PC-9 (cell line): ENCODE measurements at regions of chr2 and their contacts with region 1.

Region 1: GRCh38 chr2:1550658-1551316 is 137.5 kb downstream of the TPO start:
- DNase-seq: peak in 1 of 2 experiments; percentile 53
- H3K4me3 ChIP-seq: no peak overlapping the region
- H3K27ac ChIP-seq: no peak overlapping the region
- H3K4me1 ChIP-seq: peaks cover 27% of the 10 kb centered on the region
- H3K27me3 ChIP-seq: peaks cover 7% of the 10 kb centered on the region; the same call in 1 of the 2 replicates
- CTCF ChIP-seq: peak; percentile 95

Region 2: DNA sequence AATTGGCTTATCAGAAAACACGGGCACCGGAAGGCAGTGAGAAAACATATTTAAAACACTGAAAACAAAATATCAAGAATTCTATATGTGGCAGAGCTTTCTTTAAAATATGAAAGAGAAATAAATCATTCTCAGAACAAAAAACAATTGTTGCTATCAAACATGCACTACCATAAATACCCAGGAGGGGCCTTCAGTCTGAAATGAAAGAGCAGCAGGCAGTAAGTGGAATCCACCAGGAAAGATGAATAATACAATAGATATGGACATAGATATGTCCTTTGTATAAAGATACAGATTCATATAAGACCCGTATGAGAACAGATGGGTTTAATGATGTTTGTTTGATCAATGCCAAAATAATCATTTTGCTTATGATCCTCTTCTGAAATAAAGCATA is 1015.6 kb before region 1 on chr2:
- CTCF ChIA-PET with region 1: no interaction called
- POLR2A ChIA-PET with region 1: no interaction called
- intact Hi-C with region 1: loop called (anchors 10 kb)
- DNase-seq: no peak
- H3K4me3 ChIP-seq: no peak overlapping the region
- H3K27ac ChIP-seq: no peak overlapping the region
- H3K4me1 ChIP-seq: no peaks in the 10 kb centered on the region
- H3K27me3 ChIP-seq: peaks cover 11% of the 10 kb centered on the region; the same call in 1 of the 2 replicates
- CTCF ChIP-seq: peak; percentile 68

Region 3: GRCh38 chr2:714005-714741 is 836.6 kb before region 1 on chr2:
- CTCF ChIA-PET with region 1: no interaction called
- POLR2A ChIA-PET with region 1: no interaction called
- intact Hi-C with region 1: loop called (anchors 10 kb)
- DNase-seq: peak; percentile 20 to 40
- H3K4me3 ChIP-seq: no peak overlapping the region
- H3K27ac ChIP-seq: no peak overlapping the region
- H3K4me1 ChIP-seq: no peaks in the 10 kb centered on the region
- H3K27me3 ChIP-seq: peaks cover 99% of the 10 kb centered on the region
- CTCF ChIP-seq: peak; percentile 63

Region 4: GRCh38 chr2:1455466-1455865 is 95.3 kb before region 1 on chr2:
- CTCF ChIA-PET with region 1: no interaction called
- POLR2A ChIA-PET with region 1: no interaction called
- intact Hi-C with region 1: no loop called
- DNase-seq: no peak
- H3K4me3 ChIP-seq: no peak overlapping the region
- H3K27ac ChIP-seq: no peak overlapping the region
- H3K4me1 ChIP-seq: no peaks in the 10 kb centered on the region
- H3K27me3 ChIP-seq: peaks cover 56% of the 10 kb centered on the region
- CTCF ChIP-seq: no peak

Region 5: DNA sequence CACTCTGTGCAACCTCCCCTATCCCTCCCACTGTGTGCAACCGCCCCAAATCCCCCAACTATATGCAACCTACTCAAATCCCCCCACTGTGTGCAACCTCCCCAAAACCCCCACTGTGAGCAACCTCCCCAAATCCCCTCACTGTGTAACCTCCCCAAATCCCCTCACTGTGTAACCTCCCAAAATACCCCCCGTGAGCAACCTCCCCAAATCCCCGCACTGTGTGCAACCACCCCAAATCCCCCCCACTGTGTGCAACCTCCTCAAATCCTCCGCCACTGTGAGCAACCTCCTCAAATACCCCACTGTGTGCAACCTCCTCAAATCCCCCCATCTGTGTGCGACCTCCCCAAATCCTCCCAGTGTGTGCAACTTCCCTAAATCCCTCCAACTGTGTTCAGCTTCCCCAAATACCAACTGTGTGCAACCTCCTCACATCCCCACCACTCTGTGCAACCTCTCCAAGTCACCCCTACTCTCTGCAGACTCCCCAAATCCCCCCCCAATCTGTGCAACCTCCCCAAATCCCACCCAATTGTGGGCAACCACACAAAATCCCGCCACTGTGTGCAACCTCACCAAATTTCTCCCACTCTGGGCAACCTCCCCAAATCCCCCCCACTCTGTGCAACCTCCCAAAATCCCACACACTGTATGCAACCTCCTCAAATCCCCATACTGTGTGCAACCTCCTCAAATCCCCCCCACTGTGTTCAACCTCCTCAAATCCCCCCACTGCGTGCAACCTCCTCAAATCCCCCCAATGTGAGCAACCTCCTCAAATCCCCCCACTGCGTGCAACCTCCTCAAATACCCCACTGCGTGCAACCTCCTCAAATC is 23.4 kb before region 1 on chr2:
- CTCF ChIA-PET with region 1: no interaction called
- POLR2A ChIA-PET with region 1: no interaction called
- intact Hi-C with region 1: no loop called
- DNase-seq: no peak
- H3K4me3 ChIP-seq: no peak overlapping the region
- H3K27ac ChIP-seq: no peak overlapping the region
- H3K4me1 ChIP-seq: no peaks in the 10 kb centered on the region
- H3K27me3 ChIP-seq: no peaks in the 10 kb centered on the region
- CTCF ChIP-seq: no peak

Region 6: DNA sequence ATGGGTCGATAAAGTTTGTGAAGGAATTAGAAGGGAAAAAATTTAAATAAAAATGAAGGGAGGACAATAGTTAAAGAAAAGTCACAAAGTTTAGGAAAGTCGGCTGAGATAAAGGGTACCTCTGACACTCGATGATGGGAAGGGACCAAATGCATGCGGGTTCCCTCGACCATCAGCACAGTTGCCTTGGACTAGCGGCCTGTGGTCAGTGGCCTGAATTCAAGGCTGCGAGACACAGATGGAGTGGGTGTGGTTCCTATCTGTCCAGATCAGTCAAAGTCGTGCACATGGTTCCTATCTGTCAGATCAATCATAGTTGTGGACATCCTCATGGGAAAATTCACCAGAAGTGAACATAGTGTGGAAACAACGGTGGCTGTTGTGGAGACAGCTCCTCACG is 24.3 kb after region 1 on chr2:
- CTCF ChIA-PET with region 1: no interaction called
- POLR2A ChIA-PET with region 1: no interaction called
- intact Hi-C with region 1: no loop called
- DNase-seq: peak in 1 of 2 experiments; percentile 11
- H3K4me3 ChIP-seq: no peak overlapping the region
- H3K27ac ChIP-seq: no peak overlapping the region
- H3K4me1 ChIP-seq: peaks cover 16% of the 10 kb centered on the region
- H3K27me3 ChIP-seq: peaks cover 10% of the 10 kb centered on the region
- CTCF ChIP-seq: no peak

Region 7: DNA sequence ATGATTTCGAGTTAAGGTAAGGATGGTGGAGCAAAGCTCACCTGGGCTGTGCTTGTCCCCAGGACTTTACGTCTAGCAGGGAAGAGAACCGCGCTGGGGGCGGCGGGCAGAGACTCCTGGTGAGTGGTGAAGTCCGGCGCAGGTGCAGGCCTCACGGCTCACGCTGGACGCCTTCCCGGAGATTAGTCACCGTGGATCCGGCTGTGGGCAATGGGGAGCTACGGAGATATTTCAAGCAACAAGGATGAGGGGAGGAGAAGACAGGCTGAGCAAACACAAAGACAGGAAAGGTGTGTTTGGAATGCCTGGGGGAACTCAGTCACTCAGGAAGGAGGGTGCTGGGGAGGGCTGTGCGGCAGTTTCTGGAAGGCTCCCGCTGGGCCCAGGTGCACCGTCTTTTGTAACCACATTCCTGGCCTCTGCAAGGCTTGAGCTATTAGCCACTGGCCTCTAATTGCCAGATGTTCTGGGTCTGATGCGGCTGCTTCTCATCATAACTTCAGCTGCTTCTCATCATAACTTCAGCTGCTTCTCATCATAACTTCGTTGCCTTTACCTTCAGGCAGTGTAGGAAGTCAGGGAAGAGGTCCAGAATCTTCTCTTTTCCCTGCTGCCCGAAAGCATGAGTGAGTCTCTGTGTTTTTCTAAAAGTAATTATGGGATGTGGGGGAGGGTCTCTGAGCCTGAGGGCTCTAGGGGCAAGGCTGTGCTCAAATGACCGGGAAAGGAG is 74.6 kb after region 1 on chr2:
- CTCF ChIA-PET with region 1: no interaction called
- POLR2A ChIA-PET with region 1: no interaction called
- intact Hi-C with region 1: loop called (anchors 1 kb)
- DNase-seq: peak; percentile 85 to 97
- H3K4me3 ChIP-seq: peak overlapping the region; percentile 53
- H3K27ac ChIP-seq: peak overlapping the region; percentile 77
- H3K4me1 ChIP-seq: peaks cover 62% of the 10 kb centered on the region
- H3K27me3 ChIP-seq: no peaks in the 10 kb centered on the region; the same call in 1 of the 2 replicates
- CTCF ChIP-seq: no peak

Region 8: DNA sequence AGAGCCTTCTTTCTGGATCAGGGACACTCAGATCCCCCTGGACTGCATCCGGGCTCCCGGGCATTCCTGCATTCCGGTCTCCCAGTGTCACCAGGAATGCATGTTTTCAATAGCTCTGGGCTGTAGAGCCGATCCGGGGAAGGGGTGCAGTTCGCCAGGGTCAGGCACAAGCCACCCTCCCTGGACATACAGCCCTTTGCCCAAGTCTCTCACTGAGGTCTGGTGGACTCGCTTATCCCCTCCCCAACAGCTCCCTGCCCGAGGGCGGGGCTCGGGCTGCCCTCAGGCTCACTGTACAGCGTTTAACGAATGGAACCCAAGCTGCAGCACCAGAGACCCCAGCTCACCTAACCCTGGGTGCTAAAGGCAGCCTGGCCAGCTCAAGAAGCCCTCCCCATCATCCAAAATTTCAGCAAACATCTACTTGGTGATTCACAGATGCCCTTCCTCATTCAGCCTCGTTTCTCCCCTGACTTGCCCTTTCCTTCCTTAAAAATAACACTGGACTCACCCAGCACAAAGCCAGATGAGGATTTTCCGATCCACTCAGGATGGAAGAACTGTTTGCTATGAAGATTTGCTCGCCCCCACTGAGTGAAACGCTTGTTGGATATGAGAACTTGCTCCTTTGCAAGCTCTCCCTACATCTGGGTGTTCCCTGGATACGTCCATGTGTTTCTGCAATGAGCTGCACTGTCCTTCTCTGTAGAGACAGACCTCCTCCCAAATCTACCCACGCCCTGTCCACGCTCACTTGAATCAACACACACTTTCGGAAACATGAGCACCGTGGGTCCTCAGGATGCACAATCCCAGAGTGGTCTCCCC is 135.4 kb after region 1 on chr2:
- CTCF ChIA-PET with region 1: interaction called, 11 read pairs
- POLR2A ChIA-PET with region 1: no interaction called
- intact Hi-C with region 1: no loop called
- DNase-seq: peak; percentile 67 to 74
- H3K4me3 ChIP-seq: no peak overlapping the region
- H3K27ac ChIP-seq: peak overlapping the region; percentile 70
- H3K4me1 ChIP-seq: peaks cover 50% of the 10 kb centered on the region
- H3K27me3 ChIP-seq: peaks cover 18% of the 10 kb centered on the region; the same call in 1 of the 2 replicates
- CTCF ChIP-seq: no peak

Region 9: DNA sequence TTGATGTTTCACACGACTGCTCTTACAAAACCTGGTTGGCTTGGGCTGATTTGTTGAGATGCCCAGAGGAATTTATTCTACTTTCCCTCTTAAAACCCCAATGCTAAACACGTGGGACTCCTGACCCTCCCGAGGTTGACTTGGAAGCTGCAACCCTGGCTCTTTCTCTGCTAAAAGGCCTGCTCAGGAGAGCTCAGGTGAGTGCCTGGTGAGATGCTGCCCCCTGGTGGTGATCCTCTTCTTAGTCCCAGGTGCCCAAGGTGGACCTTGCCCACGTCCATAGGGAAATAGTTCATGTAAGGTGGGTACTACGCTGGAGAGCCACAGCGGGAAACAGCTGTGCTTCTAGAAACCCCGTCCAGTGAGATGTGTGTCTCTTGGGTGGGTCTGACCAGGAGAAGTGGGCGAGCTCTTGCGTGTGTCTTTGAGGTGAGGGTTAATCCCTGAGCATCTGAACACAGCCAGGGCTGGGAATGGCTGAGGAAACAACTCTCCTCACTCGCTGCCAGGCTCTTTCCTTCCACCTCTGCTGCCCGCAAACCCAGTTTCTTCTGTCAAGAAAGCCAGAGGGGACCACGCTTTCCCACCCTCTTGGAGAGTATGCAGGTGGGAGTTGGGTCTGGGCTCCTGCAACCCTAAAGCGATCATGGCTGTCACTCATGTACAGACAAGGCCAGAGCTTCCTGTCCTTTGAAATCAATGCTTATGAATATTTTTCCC is 219.1 kb after region 1 on chr2:
- CTCF ChIA-PET with region 1: interaction called, 3 read pairs
- POLR2A ChIA-PET with region 1: no interaction called
- intact Hi-C with region 1: loop called (anchors 5 kb)
- DNase-seq: peak; percentile 52 to 70
- H3K4me3 ChIP-seq: no peak overlapping the region
- H3K27ac ChIP-seq: no peak overlapping the region
- H3K4me1 ChIP-seq: no peaks in the 10 kb centered on the region
- H3K27me3 ChIP-seq: peaks cover 25% of the 10 kb centered on the region; the same call in 1 of the 2 replicates
- CTCF ChIP-seq: peak; percentile 92